A673 (cell line): ENCODE measurements at regions of chr11 and their contacts with region 1.

Region 1: GRCh38 chr11:72722050-72722748 is 30.0 kb downstream of the ARAP1 start:
- DNase-seq: peak; percentile 92
- H3K4me3 ChIP-seq: peak overlapping the region; percentile 54
- H3K27ac ChIP-seq: peak overlapping the region; percentile 86
- H3K4me1 ChIP-seq: peaks cover 19% of the 10 kb centered on the region
- H3K27me3 ChIP-seq: no peaks in the 10 kb centered on the region
- CTCF ChIP-seq: no peak

Region 2: DNA sequence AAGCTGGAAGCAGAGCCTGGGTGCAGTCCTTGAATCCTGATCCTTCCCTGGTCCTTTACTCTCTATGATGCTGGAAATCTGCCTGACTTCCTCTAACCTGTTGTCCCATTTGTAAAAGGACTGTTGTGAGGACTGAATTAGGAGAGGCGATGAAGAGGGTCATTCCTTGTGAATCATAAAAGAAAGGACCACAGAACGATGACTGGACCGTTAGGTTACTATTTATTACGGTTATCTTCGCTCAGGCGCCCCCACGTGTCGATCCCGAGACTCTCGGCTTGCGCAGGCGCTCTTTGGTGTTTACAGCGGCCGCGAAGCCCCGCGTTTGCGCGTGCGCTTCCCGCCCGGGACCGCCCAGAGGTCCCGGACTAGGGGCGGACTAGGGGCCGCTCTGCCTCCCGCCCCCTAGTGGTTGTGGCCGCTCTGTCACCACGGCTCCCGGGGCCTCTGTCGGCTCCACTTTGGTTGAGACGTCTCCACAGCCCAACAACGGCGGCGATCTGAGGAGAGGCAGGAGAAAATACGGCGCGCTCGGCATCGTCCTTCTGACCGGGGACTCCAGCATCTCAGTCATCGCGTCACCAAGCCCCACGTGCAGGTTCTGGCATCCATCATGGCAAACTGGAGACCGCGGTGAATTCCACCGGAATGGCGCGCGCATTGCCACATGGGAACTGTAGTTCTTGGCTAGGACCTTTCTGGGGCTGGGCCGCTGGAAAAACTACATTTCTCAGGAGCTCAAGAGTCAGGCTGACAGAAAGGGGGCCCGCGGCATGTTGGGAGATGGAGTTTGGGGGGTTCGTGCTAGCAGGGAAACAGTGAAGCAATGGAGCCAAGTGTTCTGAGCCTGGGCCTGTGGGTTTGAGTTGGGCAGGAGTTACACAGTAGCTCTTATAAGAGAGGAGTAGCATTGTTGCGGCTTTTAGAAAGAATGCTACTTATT is 71.5 kb after region 1 on chr11 and contains the start of gene STARD10:
- CTCF ChIA-PET with region 1: interaction called, 21 read pairs
- POLR2A ChIA-PET with region 1: no interaction called
- intact Hi-C with region 1: loop called (anchors 1 kb)
- DNase-seq: peak; percentile 98
- H3K4me3 ChIP-seq: peak within 1 kb of the TSS; percentile 60
- H3K27ac ChIP-seq: peak within 1 kb of the TSS; percentile 65
- H3K4me1 ChIP-seq: peaks cover 12% of the 10 kb centered on the region
- H3K27me3 ChIP-seq: no peaks in the 10 kb centered on the region
- CTCF ChIP-seq: peak; percentile 100
- total RNA-seq, gene STARD10: 16.9 and 18.3 TPM in 2 replicates

Region 3: GRCh38 chr11:73242251-73243079 is 520.3 kb after region 1 on chr11:
- CTCF ChIA-PET with region 1: interaction called, 8 read pairs
- POLR2A ChIA-PET with region 1: no interaction called
- intact Hi-C with region 1: loop called (anchors 10 kb)
- DNase-seq: peak; percentile 82
- H3K4me3 ChIP-seq: peak overlapping the region; percentile 18
- H3K27ac ChIP-seq: no peak overlapping the region
- H3K4me1 ChIP-seq: no peaks in the 10 kb centered on the region
- H3K27me3 ChIP-seq: no peaks in the 10 kb centered on the region
- CTCF ChIP-seq: peak; percentile 99

Region 4: GRCh38 chr11:73295231-73295995 is 573.2 kb after region 1 on chr11:
- CTCF ChIA-PET with region 1: no interaction called
- POLR2A ChIA-PET with region 1: no interaction called
- intact Hi-C with region 1: loop called (anchors 5 kb)
- DNase-seq: peak; percentile 89
- H3K4me3 ChIP-seq: no peak overlapping the region
- H3K27ac ChIP-seq: no peak overlapping the region
- H3K4me1 ChIP-seq: peaks cover 4% of the 10 kb centered on the region
- H3K27me3 ChIP-seq: no peaks in the 10 kb centered on the region
- CTCF ChIP-seq: peak; percentile 99

Region 5: DNA sequence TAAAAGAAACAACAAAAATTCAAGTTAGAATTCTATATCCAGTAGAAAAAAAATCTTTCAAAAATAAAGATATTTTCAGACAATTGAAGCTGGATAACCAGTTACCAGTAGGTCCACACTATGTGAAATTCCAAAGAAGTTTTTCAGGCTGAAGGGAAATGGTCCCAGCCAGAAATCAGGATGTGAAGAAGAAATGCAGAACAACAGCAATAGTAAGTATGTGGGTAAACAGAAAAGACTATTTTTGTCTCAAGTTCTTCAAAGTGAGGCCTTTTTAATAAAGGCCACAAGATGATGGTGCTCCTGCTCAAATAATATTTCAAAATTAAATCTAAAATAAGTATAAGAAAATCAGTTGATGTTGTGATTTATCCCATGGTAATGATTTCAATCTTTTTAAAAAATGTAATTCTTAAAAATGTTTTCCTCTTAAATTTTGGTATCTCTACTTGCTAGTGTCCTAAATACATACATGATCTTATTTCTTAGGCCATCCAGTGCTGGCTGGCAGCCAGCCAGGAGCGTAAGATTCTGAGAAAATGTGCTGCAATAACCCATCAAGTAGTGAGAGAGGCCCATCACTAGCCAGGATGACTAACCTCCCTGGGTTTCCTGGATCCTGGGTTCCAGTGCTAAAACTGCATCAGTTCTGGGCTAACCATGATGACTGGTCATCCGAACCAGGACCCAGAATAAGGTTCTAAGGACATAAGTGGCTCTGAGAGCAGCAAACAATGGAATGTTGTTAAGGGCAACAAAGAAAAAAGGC is 1302.2 kb after region 1 on chr11:
- CTCF ChIA-PET with region 1: no interaction called
- POLR2A ChIA-PET with region 1: no interaction called
- intact Hi-C with region 1: no loop called
- DNase-seq: no peak
- H3K4me3 ChIP-seq: no peak overlapping the region
- H3K27ac ChIP-seq: no peak overlapping the region
- H3K4me1 ChIP-seq: no peaks in the 10 kb centered on the region
- H3K27me3 ChIP-seq: no peaks in the 10 kb centered on the region
- CTCF ChIP-seq: no peak